ENCODE measurements at regions of chr19 and their contacts with region 1.

Region 1: DNA sequence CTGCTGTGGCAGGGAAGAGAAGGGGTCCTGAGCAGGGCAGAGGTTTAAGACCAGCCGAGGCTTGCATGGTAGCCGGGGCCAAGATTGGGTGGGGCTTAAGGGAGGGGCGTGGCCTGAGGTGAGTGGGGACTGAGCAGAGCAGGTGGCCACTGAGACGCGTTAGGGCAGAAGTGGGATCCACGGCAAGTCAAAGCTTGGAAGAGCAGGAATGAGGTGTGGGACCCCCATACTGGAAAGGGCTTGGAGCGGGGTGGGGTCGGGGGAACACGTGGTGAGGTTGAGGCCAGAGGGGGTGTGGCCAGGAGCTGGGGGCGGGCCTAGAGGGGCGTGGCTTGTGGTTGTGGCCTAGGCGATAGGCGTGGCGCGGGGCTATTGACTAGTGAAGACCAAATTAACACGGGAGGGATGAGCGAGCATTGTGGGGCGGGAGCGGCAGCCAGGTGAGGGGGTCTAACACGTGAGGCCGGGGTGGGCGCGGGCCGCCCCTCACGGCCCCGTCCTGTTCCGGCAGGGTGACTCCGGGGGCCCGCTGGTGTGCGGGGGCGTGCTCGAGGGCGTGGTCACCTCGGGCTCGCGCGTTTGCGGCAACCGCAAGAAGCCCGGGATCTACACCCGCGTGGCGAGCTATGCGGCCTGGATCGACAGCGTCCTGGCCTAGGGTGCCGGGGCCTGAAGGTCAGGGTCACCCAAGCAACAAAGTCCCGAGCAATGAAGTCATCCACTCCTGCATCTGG is 3.3 kb downstream of the CFD start:
- H3K4me3 ChIP-seq: no peak overlapping the region
- H3K27ac ChIP-seq: no peak overlapping the region
- H3K4me1 ChIP-seq: no peaks in the 10 kb centered on the region
- CTCF ChIP-seq: no peak

Region 2: GRCh38 chr19:615619-616018 is 247.1 kb before region 1 on chr19:
- CTCF ChIA-PET with region 1: no interaction called
- POLR2A ChIA-PET with region 1: no interaction called
- H3K4me3 ChIP-seq: no peak overlapping the region
- H3K27ac ChIP-seq: no peak overlapping the region
- H3K4me1 ChIP-seq: no peaks in the 10 kb centered on the region
- CTCF ChIP-seq: no peak

Region 3: GRCh38 chr19:771332-771785 is 91.4 kb before region 1 on chr19:
- CTCF ChIA-PET with region 1: interaction called, 21 read pairs
- POLR2A ChIA-PET with region 1: no interaction called
- H3K4me3 ChIP-seq: no peak overlapping the region
- H3K27ac ChIP-seq: no peak overlapping the region
- H3K4me1 ChIP-seq: no peaks in the 10 kb centered on the region
- CTCF ChIP-seq: no peak

Region 4: DNA sequence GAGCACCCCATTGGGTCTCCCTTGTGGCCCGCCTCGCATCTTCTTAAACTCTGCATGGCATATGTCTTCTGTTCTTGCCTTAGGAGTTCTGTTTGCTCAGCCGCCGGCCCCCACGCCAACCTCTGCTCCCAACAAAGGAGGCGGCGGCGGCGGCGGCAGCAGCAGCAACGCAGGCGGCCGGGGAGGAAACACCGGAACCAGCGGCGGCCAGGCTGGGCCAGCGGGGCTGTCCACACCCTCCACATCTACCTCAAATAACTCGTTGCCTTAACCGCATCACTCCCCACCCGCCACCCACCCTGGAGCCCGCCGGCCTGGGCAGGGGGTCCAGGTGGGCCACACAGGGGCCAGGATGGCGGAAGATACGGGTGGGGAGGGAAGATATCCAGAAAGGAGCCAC is 109.0 kb after region 1 on chr19:
- CTCF ChIA-PET with region 1: no interaction called
- POLR2A ChIA-PET with region 1: no interaction called
- H3K4me3 ChIP-seq: no peak overlapping the region
- H3K27ac ChIP-seq: no peak overlapping the region
- H3K4me1 ChIP-seq: no peaks in the 10 kb centered on the region
- CTCF ChIP-seq: no peak

Measured in HEK293 (cell line).